Calu3 (cell line): ENCODE measurements at regions of chr20 and their contacts with region 1.

Region 1: GRCh38 chr20:53915446-53916172 is 154.8 kb downstream of the BCAS1 start:
- DNase-seq: peak; percentile 99
- H3K4me3 Mint-ChIP-seq: peak overlapping the region; percentile 71
- H3K27ac Mint-ChIP-seq: peak overlapping the region; percentile 90
- H3K4me1 Mint-ChIP-seq: peaks cover 50% of the 10 kb centered on the region
- H3K27me3 Mint-ChIP-seq: no peaks in the 10 kb centered on the region
- CTCF ChIP-seq: peak; percentile 91

Region 2: DNA sequence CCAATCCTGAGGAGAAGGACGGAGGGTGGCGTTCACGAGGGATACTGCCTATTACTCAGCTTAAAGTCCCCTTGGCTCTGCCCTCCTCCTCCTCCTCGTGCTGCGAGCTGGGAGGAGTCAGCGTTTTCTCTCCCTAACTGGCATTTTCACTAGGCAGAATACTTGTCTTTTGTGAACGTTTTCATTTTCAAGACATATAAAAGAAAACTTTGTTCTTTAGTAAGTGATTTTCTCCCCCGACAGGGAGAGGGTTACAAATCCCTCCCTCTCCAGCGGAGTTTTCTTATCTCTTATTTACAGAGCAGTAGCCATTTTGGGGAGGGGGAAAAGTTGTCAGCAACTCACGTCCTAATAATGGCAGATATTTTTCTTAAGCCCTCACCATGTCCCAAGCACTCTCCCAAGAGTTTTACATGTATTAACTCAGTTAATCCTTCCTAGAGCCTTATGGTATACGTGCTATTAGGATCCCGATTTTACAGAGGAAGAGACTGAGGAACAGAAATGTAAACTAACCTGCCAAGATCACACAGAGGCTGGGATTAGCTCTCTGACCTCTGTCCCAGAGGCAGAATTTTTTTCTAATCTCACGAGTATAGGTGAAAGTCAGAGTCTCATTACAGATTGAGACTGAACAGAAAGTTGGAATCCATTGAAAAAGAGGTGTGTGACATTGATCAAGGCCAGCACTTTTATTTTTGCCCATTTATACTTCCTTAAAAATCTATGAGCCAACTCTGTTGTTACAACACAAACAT is 292.0 kb before region 1 on chr20:
- CTCF ChIA-PET with region 1: interaction called, 5 read pairs
- intact Hi-C with region 1: loop called (anchors 5 kb)
- DNase-seq: peak; percentile 71
- H3K4me3 Mint-ChIP-seq: peak overlapping the region; percentile 67
- H3K27ac Mint-ChIP-seq: peak overlapping the region; percentile 99
- H3K4me1 Mint-ChIP-seq: peaks cover 40% of the 10 kb centered on the region
- H3K27me3 Mint-ChIP-seq: no peaks in the 10 kb centered on the region
- CTCF ChIP-seq: no peak

Region 3: GRCh38 chr20:53660078-53660909 is 255.3 kb before region 1 on chr20:
- CTCF ChIA-PET with region 1: no interaction called
- intact Hi-C with region 1: loop called (anchors 1 kb)
- DNase-seq: no peak
- H3K4me3 Mint-ChIP-seq: peak overlapping the region; percentile 64
- H3K27ac Mint-ChIP-seq: no peak overlapping the region
- H3K4me1 Mint-ChIP-seq: peaks cover 34% of the 10 kb centered on the region
- H3K27me3 Mint-ChIP-seq: no peaks in the 10 kb centered on the region
- CTCF ChIP-seq: no peak

Region 4: GRCh38 chr20:53677447-53678314 is 237.9 kb before region 1 on chr20:
- CTCF ChIA-PET with region 1: no interaction called
- intact Hi-C with region 1: no loop called
- DNase-seq: peak; percentile 76
- H3K4me3 Mint-ChIP-seq: peak overlapping the region; percentile 51
- H3K27ac Mint-ChIP-seq: peak overlapping the region; percentile 76
- H3K4me1 Mint-ChIP-seq: peaks cover 45% of the 10 kb centered on the region
- H3K27me3 Mint-ChIP-seq: no peaks in the 10 kb centered on the region
- CTCF ChIP-seq: peak; percentile 40

Region 5: DNA sequence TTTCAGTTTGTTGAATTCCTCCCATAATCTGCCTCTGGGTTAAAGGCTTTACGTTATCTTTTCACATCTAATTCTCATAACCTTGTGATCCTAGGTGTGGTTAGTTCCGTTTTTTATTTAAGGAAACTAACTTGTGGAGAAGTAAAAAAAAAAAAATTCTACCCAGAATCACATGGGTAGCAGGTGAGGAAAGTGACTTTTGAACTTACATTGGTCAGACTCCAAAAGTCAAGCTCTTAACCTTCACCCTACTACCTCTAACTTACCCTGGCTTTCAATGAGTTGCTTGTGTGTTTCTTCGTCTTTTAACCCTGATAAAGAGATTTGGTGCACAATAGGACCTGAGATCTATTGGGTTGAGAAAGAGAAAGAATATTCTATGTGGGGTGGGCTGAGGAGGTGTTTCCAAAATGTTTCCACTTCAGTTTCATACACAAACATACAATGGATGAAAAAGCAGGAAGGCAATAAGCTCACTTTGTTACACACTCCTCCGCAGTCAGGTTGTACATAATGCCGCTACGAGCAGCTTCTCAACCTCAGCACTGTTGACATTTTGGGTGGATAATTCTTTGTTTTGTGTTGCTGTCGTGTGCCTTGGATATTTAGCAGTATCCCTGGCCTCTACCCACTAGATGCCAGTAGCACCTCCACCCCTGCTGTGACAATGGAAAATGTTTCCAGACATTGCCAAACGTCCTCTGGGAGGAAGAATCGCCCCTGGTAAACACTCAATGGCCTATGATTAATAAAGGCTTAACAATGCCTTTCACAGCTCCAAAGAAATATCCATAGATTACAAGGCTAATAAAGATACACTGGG is 129.0 kb before region 1 on chr20:
- CTCF ChIA-PET with region 1: interaction called, 11 read pairs
- intact Hi-C with region 1: loop called (anchors 2 kb)
- DNase-seq: peak; percentile 37
- H3K4me3 Mint-ChIP-seq: peak overlapping the region; percentile 51
- H3K27ac Mint-ChIP-seq: peak overlapping the region; percentile 78
- H3K4me1 Mint-ChIP-seq: peaks cover 42% of the 10 kb centered on the region
- H3K27me3 Mint-ChIP-seq: no peaks in the 10 kb centered on the region
- CTCF ChIP-seq: no peak

Region 6: DNA sequence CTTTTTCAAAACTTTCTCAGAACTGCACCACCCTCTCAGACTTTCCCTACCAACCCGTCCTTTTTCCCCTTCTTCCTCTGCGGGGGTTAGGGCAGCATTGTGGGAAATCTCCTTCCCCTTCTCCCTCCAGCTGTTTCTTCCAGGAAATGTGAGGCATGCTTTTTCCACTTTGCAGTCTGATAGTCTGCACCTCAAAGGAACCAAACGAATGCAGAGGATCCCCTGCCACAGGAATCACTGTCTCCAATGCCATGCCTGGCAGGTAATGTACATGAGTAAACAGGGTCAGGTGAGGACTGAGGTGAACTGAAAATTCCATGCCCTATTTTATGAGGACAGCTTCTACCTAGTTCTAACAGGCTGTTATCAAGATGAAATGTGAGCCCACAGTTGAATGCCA is 63.6 kb before region 1 on chr20:
- CTCF ChIA-PET with region 1: interaction called, 11 read pairs
- intact Hi-C with region 1: no loop called
- DNase-seq: no peak
- H3K4me3 Mint-ChIP-seq: no peak overlapping the region
- H3K27ac Mint-ChIP-seq: no peak overlapping the region
- H3K4me1 Mint-ChIP-seq: no peaks in the 10 kb centered on the region
- H3K27me3 Mint-ChIP-seq: no peaks in the 10 kb centered on the region
- CTCF ChIP-seq: no peak

Region 7: GRCh38 chr20:53899351-53900167 is 16.1 kb before region 1 on chr20:
- CTCF ChIA-PET with region 1: interaction called, 60 read pairs
- intact Hi-C with region 1: no loop called
- DNase-seq: peak; percentile 50
- H3K4me3 Mint-ChIP-seq: no peak overlapping the region
- H3K27ac Mint-ChIP-seq: peak overlapping the region; percentile 89
- H3K4me1 Mint-ChIP-seq: peaks cover 62% of the 10 kb centered on the region
- H3K27me3 Mint-ChIP-seq: no peaks in the 10 kb centered on the region
- CTCF ChIP-seq: no peak